ENCODE measurements at regions of chr18 and their contacts with region 1.

Region 1: DNA sequence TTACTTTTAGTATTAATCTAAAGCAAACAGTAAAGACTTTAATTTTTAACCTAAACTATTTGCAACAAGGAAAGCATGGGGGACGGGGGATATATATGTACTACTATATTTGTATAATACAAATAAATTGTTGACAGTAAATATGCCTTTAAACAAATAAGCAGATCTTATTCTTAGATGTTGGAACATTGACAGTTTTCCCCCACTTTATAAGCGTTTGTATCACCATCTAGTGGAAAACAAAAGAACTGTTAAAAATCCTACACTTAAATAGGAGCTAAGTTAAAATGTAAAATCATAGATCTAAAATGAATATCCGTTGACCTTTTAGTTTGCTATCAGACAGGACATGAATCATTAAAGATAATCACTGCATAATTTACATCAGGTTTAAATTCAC is 50.0 kb downstream of the RBBP8 start:
- DNase-seq: peak; percentile 68
- H3K4me3 ChIP-seq: no peak overlapping the region
- H3K27ac ChIP-seq: no peak overlapping the region
- H3K4me1 ChIP-seq: peaks cover 6% of the 10 kb centered on the region
- H3K27me3 ChIP-seq: no peaks in the 10 kb centered on the region
- CTCF ChIP-seq: peak in 1 of 2 donors; percentile 15
- POLR2A ChIP-seq: no peak

Region 2: DNA sequence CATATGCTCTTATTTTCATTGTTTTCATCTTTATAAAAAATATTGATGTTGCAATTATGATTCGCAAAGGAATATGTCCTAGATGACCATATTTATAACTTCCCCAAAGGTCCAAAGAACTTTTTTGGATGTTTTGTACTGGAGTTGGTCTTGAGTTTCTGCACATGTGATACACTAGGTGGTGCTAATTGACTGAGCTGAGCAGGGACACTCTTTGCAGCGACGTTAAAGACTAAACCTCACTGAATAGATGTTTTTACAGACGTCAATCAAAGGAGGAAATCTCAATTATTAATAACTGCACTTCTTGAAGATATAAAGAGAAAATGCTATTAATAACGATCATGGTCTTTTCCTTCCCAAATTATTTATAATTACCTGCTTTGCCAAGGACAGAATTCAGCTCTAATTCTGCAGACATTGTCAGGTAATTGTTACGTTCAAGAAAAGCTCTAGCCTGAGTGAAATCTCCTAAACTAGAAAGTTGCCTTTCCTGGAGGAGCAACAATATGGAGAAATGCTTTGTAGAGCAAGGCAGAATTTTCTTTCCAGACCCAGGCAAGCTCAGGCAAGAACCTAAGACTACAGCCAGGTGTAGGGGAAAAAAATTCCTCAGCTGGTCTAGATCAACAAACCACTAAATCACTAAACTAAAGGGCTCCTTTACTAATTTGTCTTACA is 169.4 kb before region 1 on chr18:
- CTCF ChIA-PET with region 1: interaction called, 139 read pairs
- POLR2A ChIA-PET with region 1: no interaction called
- dilution Hi-C with region 1: no loop called
- intact Hi-C with region 1: loop called (anchors 1 kb)
- DNase-seq: peak; percentile 56
- H3K4me3 ChIP-seq: no peak overlapping the region
- H3K27ac ChIP-seq: no peak overlapping the region
- H3K4me1 ChIP-seq: peaks cover 11% of the 10 kb centered on the region
- H3K27me3 ChIP-seq: peaks cover 30 to 44% of the 10 kb centered on the region in 2 experiments
- CTCF ChIP-seq: peak; percentile 22 to 46
- POLR2A ChIP-seq: no peak

Region 3: GRCh38 chr18:22933206-22933957 is 49.8 kb before region 1 on chr18 and contains the start of gene RBBP8:
- CTCF ChIA-PET with region 1: interaction called, 219 read pairs
- POLR2A ChIA-PET with region 1: interaction called, 9 read pairs
- dilution Hi-C with region 1: no loop called
- intact Hi-C with region 1: loop called (anchors 1 kb)
- DNase-seq: peak; percentile 84
- H3K4me3 ChIP-seq: peak within 1 kb of the TSS; percentile 41 to 84 (median 54)
- H3K27ac ChIP-seq: peak within 1 kb of the TSS; percentile 73
- H3K4me1 ChIP-seq: peaks cover 21% of the 10 kb centered on the region
- H3K27me3 ChIP-seq: no peaks in the 10 kb centered on the region
- CTCF ChIP-seq: no peak
- POLR2A ChIP-seq: peak; percentile 59
- total RNA-seq, gene RBBP8: 13.5 and 15.4 TPM in 2 replicates

Region 4: GRCh38 chr18:22964116-22964515 is 19.1 kb before region 1 on chr18:
- CTCF ChIA-PET with region 1: interaction called, 18 read pairs
- POLR2A ChIA-PET with region 1: no interaction called
- dilution Hi-C with region 1: no loop called
- intact Hi-C with region 1: no loop called
- DNase-seq: no peak
- H3K4me3 ChIP-seq: no peak overlapping the region
- H3K27ac ChIP-seq: no peak overlapping the region
- H3K4me1 ChIP-seq: no peaks in the 10 kb centered on the region
- H3K27me3 ChIP-seq: no peaks in the 10 kb centered on the region
- CTCF ChIP-seq: no peak
- POLR2A ChIP-seq: no peak

Region 5: GRCh38 chr18:23020555-23021294 is 37.5 kb after region 1 on chr18:
- CTCF ChIA-PET with region 1: interaction called, 10 read pairs
- POLR2A ChIA-PET with region 1: no interaction called
- dilution Hi-C with region 1: no loop called
- intact Hi-C with region 1: no loop called
- DNase-seq: no peak
- H3K4me3 ChIP-seq: no peak overlapping the region
- H3K27ac ChIP-seq: no peak overlapping the region
- H3K4me1 ChIP-seq: no peaks in the 10 kb centered on the region
- H3K27me3 ChIP-seq: no peaks in the 10 kb centered on the region
- CTCF ChIP-seq: no peak
- POLR2A ChIP-seq: no peak

Region 6: DNA sequence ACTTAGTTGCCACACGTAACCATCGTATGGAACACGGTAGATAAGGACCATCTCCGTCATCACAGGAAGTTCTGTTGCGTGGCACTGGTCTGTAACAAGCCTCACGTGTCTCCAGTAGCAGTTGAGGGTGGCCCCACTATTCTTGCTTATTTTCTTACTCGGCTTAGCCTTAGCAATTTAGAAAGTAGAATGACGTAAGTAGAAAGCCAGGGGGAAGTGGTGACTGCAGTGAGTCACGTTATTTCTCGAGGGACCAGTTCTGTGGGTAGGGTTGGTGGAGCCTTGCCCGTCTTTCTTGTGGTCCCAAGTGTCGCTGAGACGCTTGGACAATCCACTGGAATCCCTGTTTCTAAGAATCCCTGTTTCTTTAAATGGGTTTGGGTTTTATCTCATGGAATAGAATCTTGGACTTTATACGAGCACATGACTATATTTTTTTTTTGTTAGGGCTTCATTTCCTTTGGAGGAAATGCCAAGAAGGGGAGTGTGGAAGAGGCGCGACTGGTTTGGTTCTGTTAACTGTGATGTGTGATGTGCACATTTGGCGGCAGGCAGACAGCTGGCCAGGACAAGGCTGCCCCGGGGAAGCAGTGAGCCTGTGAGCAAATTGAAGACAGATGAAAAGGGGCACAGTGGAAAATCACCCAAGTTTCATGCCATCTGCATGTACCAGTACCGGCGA is 248.3 kb after region 1 on chr18:
- CTCF ChIA-PET with region 1: no interaction called
- POLR2A ChIA-PET with region 1: no interaction called
- dilution Hi-C with region 1: no loop called
- intact Hi-C with region 1: no loop called
- DNase-seq: peak; percentile 97
- H3K4me3 ChIP-seq: no peak overlapping the region
- H3K27ac ChIP-seq: peak overlapping the region; percentile 90
- H3K4me1 ChIP-seq: peaks cover 50% of the 10 kb centered on the region
- H3K27me3 ChIP-seq: no peaks in the 10 kb centered on the region
- CTCF ChIP-seq: no peak
- POLR2A ChIP-seq: peak; percentile 27